Activated CD8-positive, alpha-beta T cell treated with anti-CD3 and anti-CD28 coated beads for 36 hours (primary cell): ENCODE measurements at regions of chr12 and their contacts with region 1.

Region 1: DNA sequence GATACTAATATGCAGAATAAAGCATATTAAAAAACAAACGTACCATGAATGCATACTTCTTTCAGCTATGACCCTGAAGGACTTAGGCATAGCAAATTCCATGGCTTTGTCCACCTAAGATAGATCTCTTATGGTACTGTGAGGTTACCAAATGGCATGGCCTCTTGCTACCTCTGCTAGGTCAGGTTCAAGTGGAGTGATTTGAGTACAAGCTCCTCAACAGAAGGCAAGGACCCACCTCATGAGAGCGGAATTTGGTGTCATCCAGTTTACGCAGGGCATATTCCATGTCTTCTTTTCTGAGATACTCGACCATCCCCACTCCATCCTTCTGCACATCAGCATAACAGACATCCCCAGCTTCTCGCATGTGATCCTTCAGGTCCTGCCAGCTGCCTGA is 5.8 kb downstream of the SRSF9 start:
- DNase-seq: no peak
- ATAC-seq: no peak
- H3K4me3 Mint-ChIP-seq: no peak overlapping the region
- H3K27ac Mint-ChIP-seq: no peak overlapping the region
- H3K4me1 Mint-ChIP-seq: peaks cover 33% of the 10 kb centered on the region
- H3K27me3 Mint-ChIP-seq: no peaks in the 10 kb centered on the region
- CTCF ChIP-seq: no peak

Region 2: GRCh38 chr12:120445911-120446843 is 17.5 kb before region 1 on chr12 and contains the starts of genes GATC and TRIAP1:
- CTCF ChIA-PET with region 1: interaction called, 110 read pairs
- POLR2A ChIA-PET with region 1: interaction called, 18 read pairs
- intact Hi-C with region 1: no loop called
- DNase-seq: peak; percentile 91
- ATAC-seq: peak; percentile 95
- H3K4me3 Mint-ChIP-seq: peak within 1 kb of the TSS; percentile 94
- H3K27ac Mint-ChIP-seq: peak within 1 kb of the TSS; percentile 97
- H3K4me1 Mint-ChIP-seq: peaks cover 41% of the 10 kb centered on the region
- H3K27me3 Mint-ChIP-seq: no peaks in the 10 kb centered on the region
- CTCF ChIP-seq: no peak
- total RNA-seq, gene GATC: 32.2 to 39.3 TPM
- total RNA-seq, gene TRIAP1: 43.1 to 45.1 TPM